Ovary (tissue), 10 donors: ENCODE measurements at regions of chr7 and their contacts with region 1.

Region 1: DNA sequence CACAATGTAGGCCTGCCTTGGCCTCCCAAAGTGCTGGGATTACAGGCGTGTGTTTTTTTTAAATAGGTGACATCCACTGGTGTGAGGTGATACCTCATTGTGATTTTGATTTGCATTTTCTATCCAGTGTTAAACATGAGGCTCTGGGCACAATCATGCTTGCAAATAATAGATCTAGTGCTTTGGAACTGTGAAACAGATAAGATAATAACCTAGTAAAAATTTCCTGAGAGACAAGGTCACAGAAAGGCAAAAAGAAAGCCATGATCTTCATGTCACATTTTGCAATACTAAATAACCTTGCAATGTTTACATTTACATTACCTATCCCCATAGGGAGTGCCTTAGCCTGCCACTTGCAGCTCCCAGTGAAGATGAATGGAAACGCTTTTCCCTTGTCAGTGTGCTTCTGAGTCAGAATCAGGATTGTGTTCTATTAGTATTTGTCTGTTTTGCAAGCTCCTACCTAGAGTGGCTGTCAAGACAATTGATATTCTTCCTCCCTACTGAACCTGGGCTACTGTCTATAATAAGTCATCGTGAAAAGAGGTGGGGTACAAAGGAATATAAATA is 256.5 kb downstream of the PHTF2 start:
- DNase-seq: no peak
- H3K4me3 ChIP-seq: no peak overlapping the region
- H3K27ac ChIP-seq: no peak overlapping the region
- H3K4me1 ChIP-seq: no peaks in the 10 kb centered on the region
- H3K27me3 ChIP-seq: no peaks in the 10 kb centered on the region
- CTCF ChIP-seq: no peak
- EP300 ChIP-seq: no peak
- POLR2A ChIP-seq: no peak

Region 2: GRCh38 chr7:77368974-77369373 is 686.1 kb before region 1 on chr7:
- intact Hi-C with region 1: loop called in 1 of 4 experiments (anchors 5 kb)
- DNase-seq: no peak
- H3K4me3 ChIP-seq: no peak overlapping the region
- H3K27ac ChIP-seq: no peak overlapping the region
- H3K4me1 ChIP-seq: no peaks in the 10 kb centered on the region
- H3K27me3 ChIP-seq: no peaks in the 10 kb centered on the region
- CTCF ChIP-seq: no peak
- EP300 ChIP-seq: no peak
- POLR2A ChIP-seq: no peak

Region 3: GRCh38 chr7:77989981-77990566 is 65.0 kb before region 1 on chr7:
- intact Hi-C with region 1: no loop called
- DNase-seq: no peak
- H3K4me3 ChIP-seq: no peak overlapping the region
- H3K27ac ChIP-seq: no peak overlapping the region
- H3K4me1 ChIP-seq: no peaks in the 10 kb centered on the region
- H3K27me3 ChIP-seq: no peaks in the 10 kb centered on the region
- CTCF ChIP-seq: no peak
- EP300 ChIP-seq: no peak
- POLR2A ChIP-seq: no peak

Region 4: GRCh38 chr7:78677391-78677790 is 622.3 kb after region 1 on chr7:
- intact Hi-C with region 1: no loop called
- DNase-seq: no peak
- H3K4me3 ChIP-seq: no peak overlapping the region
- H3K27ac ChIP-seq: no peak overlapping the region
- H3K4me1 ChIP-seq: no peaks in the 10 kb centered on the region
- H3K27me3 ChIP-seq: no peaks in the 10 kb centered on the region
- CTCF ChIP-seq: no peak
- EP300 ChIP-seq: no peak
- POLR2A ChIP-seq: no peak